ENCODE measurements at regions of chr7 and their contacts with region 1.

Region 1: DNA sequence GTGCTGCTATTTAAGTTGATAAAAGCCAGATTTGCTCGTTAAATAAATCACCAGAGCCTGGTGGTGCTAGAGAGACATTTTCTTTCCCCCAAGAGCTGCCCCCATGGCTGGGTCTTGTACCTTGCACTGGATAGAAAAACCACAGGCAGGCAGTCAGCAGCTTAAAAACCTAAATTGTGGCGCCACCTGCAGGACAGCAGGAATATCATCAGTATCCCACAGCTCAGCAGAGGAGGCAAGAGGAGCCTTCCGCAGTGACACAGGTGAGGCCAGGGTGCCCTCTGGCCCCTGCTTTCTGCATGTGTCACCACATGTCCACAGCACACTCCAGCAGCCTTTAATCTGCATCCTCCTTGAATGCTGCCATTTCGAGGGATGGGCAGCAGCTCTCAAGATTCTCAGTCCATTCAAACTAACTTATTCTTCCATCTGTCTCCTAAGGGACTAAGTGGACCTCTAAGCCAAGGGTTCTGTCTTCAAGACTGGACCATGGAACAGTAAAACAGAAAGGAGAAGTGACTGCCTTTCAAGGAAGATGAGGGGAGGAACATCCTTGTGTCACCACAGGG is 4.5 kb upstream of the PLXNA4 start:
- DNase-seq: no peak
- ATAC-seq: peak; percentile 56 to 80
- H3K4me3 ChIP-seq: no peak overlapping the region
- H3K27ac ChIP-seq: no peak overlapping the region
- H3K4me1 ChIP-seq: peaks cover 6% of the 10 kb centered on the region
- H3K27me3 ChIP-seq: peaks cover 27% of the 10 kb centered on the region
- CTCF ChIP-seq: peak; percentile 79

Region 2: GRCh38 chr7:132318352-132319318 is 262.2 kb before region 1 on chr7:
- intact Hi-C with region 1: loop called (anchors 5 kb)
- DNase-seq: peak; percentile 86
- ATAC-seq: peak; percentile 88 to 92
- H3K4me3 ChIP-seq: no peak overlapping the region
- H3K27ac ChIP-seq: no peak overlapping the region
- H3K4me1 ChIP-seq: peaks cover 8% of the 10 kb centered on the region
- H3K27me3 ChIP-seq: peaks cover 10% of the 10 kb centered on the region
- CTCF ChIP-seq: peak; percentile 88

Measured in lower lobe of right lung (tissue), 2 donors.